ENCODE measurements at regions of chr9 and their contacts with region 1.

Region 1: DNA sequence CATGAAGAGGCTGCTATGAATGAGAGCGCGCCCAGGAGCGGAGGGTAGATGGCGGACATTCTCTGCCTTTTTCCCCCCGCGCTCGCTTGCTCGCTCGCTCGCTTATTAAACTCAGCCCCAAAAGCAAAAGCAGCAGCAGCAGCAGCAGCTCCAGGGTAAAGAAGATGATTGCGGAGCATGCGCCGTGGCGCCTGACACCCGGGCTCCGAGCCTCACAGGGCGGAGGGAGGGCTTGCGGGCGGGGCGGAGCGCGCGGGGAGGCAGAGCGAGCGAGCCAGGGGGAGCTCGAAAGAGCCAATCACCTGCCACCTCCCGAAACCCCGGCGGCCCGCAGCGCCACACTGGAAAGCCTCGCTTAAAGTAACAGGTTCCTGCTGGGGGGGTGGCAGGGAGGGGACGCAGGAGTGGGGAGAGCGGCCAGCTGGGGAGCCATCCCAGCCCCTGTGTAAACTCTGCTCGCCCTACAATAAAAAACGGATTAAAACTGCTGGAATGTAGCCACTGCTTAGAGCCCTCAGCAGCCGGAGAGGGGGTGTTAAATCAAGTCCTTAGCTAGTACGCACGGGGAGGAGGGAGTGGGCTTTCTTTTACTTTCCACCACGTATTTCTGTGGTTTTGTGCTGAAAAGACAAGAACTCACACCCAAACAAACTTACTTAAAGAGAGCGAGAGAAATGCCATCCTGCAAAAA is at the start of gene MLLT3:
- DNase-seq: peak; percentile 84
- ATAC-seq: peak; percentile 91
- H3K4me3 ChIP-seq: peak within 1 kb of the TSS; percentile 81 to 88 (median 85)
- H3K27ac ChIP-seq: peak within 1 kb of the TSS; percentile 60
- H3K4me1 ChIP-seq: peaks cover 26% of the 10 kb centered on the region
- H3K27me3 ChIP-seq: peaks cover 0 to 24% of the 10 kb centered on the region in 2 experiments; a peak in 2 of 5 replicates
- CTCF ChIP-seq: peak; percentile 25
- EP300 ChIP-seq: no peak
- POLR2A ChIP-seq: no peak
- RAD21 ChIP-seq: no peak
- total RNA-seq, gene MLLT3: 12.3 and 18.5 TPM in 2 replicates

Region 2: GRCh38 chr9:20356403-20357035 is 266.0 kb before region 1 on chr9:
- CTCF ChIA-PET with region 1: interaction called, 5 read pairs
- POLR2A ChIA-PET with region 1: interaction called, 13 read pairs
- in situ Hi-C with region 1: loop called (anchors 5 kb)
- intact Hi-C with region 1: loop called (anchors 1 kb)
- DNase-seq: peak; percentile 64
- ATAC-seq: peak; percentile 96
- H3K4me3 ChIP-seq: no peak overlapping the region; a peak in 2 of 6 replicates
- H3K27ac ChIP-seq: peak overlapping the region; percentile 6
- H3K4me1 ChIP-seq: peaks cover 18% of the 10 kb centered on the region
- H3K27me3 ChIP-seq: no peaks in the 10 kb centered on the region
- CTCF ChIP-seq: peak; percentile 85
- EP300 ChIP-seq: no peak
- POLR2A ChIP-seq: no peak
- RAD21 ChIP-seq: peak; percentile 69

Region 3: DNA sequence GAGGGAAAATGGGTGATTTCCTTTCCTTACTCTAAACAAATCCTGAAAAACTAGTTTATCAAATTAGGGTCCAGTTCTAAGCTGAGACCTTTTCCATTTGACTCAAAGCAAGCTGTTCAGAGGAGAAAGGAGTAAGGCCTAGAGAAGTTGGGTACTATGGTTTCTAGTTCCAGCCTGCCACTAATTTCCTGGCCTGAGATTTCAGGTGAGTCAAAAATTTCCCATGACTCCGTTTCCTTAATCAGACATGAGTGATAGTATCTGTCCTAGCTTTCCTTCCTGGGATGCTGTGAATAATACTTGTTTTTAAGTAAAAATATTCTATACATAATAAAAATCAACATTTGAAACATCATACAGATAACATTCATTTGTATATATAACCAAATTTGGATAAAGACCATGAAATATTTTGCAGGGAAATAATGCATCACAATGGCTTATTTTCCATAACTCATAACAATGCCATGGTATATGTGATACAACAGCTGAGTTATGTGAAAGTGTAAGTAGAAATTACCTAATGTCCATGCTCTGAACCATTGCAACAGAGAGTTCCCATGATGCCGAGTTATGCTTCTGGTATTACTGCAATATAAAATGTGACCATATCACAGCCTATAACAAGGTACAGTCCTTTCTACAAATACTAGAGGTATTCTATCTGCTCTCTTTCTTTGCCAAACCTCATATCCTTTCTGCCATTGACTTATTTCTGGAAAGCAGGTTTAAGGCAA is 142.9 kb before region 1 on chr9:
- CTCF ChIA-PET with region 1: no interaction called
- POLR2A ChIA-PET with region 1: no interaction called
- in situ Hi-C with region 1: no loop called
- intact Hi-C with region 1: loop called (anchors 5 kb)
- DNase-seq: no peak
- ATAC-seq: no peak
- H3K4me3 ChIP-seq: no peak overlapping the region
- H3K27ac ChIP-seq: no peak overlapping the region
- H3K4me1 ChIP-seq: peaks cover 45% of the 10 kb centered on the region
- H3K27me3 ChIP-seq: no peaks in the 10 kb centered on the region
- CTCF ChIP-seq: no peak
- EP300 ChIP-seq: no peak
- POLR2A ChIP-seq: no peak
- RAD21 ChIP-seq: no peak

Region 4: GRCh38 chr9:20558566-20559016 is 63.9 kb before region 1 on chr9:
- CTCF ChIA-PET with region 1: no interaction called
- POLR2A ChIA-PET with region 1: no interaction called
- in situ Hi-C with region 1: loop called (anchors 10 kb)
- intact Hi-C with region 1: loop called (anchors 5 kb)
- DNase-seq: no peak
- ATAC-seq: no peak
- H3K4me3 ChIP-seq: no peak overlapping the region
- H3K27ac ChIP-seq: no peak overlapping the region
- H3K4me1 ChIP-seq: peaks cover 6% of the 10 kb centered on the region
- H3K27me3 ChIP-seq: no peaks in the 10 kb centered on the region
- CTCF ChIP-seq: no peak
- EP300 ChIP-seq: no peak
- POLR2A ChIP-seq: no peak
- RAD21 ChIP-seq: no peak

Region 5: GRCh38 chr9:20640331-20641187 is 18.1 kb after region 1 on chr9:
- CTCF ChIA-PET with region 1: no interaction called
- POLR2A ChIA-PET with region 1: no interaction called
- in situ Hi-C with region 1: no loop called
- intact Hi-C with region 1: no loop called
- DNase-seq: no peak
- ATAC-seq: no peak
- H3K4me3 ChIP-seq: no peak overlapping the region
- H3K27ac ChIP-seq: no peak overlapping the region
- H3K4me1 ChIP-seq: no peaks in the 10 kb centered on the region
- H3K27me3 ChIP-seq: 0 out of 5 replicates have a peak, but pooled peaks cover 0 to 6% of the 10 kb centered on the region in 2 experiments
- CTCF ChIP-seq: no peak
- EP300 ChIP-seq: no peak
- POLR2A ChIP-seq: no peak
- RAD21 ChIP-seq: no peak

Region 6: DNA sequence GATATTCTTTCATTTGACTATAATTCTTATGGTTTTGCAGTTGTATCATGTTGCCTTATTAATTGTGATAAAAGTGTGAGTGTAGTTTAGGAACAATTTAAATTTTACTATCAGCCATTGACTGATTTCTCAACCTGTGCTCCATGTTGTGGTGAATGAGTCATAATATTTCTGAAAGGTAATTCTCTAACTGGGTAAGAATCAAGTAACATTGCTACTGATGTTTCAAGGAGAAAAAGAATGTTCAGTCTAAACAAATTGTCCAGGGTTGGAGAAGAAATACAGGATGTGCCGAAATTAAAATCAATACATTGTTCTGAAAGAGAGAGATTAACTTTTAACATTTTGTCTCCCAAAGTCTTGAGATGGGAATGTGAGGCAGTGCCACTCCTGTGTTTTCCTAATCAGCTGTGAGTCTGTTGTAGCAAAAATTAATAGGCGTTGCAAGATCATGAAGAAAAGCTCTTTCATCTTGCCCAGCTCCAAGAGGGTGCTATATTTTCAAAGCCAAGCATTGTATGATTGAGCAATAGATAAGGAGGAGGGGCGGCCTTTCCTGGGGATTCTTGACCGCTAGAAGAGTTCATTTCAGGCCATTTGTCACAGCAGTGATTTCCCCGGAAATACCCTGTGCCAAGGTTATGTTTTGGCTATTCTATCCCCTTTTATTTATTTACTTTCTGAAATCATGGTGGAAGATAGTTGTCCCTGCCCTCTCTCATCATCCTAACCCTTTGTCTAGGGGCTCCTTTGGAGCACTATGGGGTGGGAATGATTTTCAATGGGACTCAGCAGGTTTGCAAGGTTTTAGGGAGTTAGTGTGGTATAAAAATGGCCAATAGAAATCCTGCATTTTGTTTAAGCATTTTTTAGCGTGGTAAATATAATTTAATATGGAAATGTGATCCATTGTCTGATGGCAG is 213.2 kb after region 1 on chr9:
- CTCF ChIA-PET with region 1: no interaction called
- POLR2A ChIA-PET with region 1: no interaction called
- in situ Hi-C with region 1: no loop called
- intact Hi-C with region 1: loop called (anchors 2 kb)
- DNase-seq: peak; percentile 85
- ATAC-seq: peak; percentile 93
- H3K4me3 ChIP-seq: no peak overlapping the region
- H3K27ac ChIP-seq: peak overlapping the region; percentile 21
- H3K4me1 ChIP-seq: peaks cover 18% of the 10 kb centered on the region
- H3K27me3 ChIP-seq: no peaks in the 10 kb centered on the region
- CTCF ChIP-seq: no peak
- EP300 ChIP-seq: peak; percentile 40 to 84; a peak in 2 of 4 replicates
- POLR2A ChIP-seq: no peak
- RAD21 ChIP-seq: no peak

Region 7: GRCh38 chr9:20941174-20941690 is 318.8 kb after region 1 on chr9:
- CTCF ChIA-PET with region 1: interaction called, 23 read pairs
- POLR2A ChIA-PET with region 1: interaction called, 3 read pairs
- in situ Hi-C with region 1: loop called (anchors 5 kb)
- intact Hi-C with region 1: loop called (anchors 1 kb)
- DNase-seq: peak; percentile 63
- ATAC-seq: peak; percentile 100
- H3K4me3 ChIP-seq: no peak overlapping the region
- H3K27ac ChIP-seq: no peak overlapping the region
- H3K4me1 ChIP-seq: no peaks in the 10 kb centered on the region
- H3K27me3 ChIP-seq: no peaks in the 10 kb centered on the region
- CTCF ChIP-seq: peak; percentile 94
- EP300 ChIP-seq: no peak
- POLR2A ChIP-seq: no peak
- RAD21 ChIP-seq: peak; percentile 83

Region 8: GRCh38 chr9:21688108-21689102 is 1065.9 kb after region 1 on chr9:
- CTCF ChIA-PET with region 1: no interaction called
- POLR2A ChIA-PET with region 1: no interaction called
- in situ Hi-C with region 1: no loop called
- intact Hi-C with region 1: no loop called
- DNase-seq: no peak
- ATAC-seq: no peak
- H3K4me3 ChIP-seq: no peak overlapping the region
- H3K27ac ChIP-seq: no peak overlapping the region
- H3K4me1 ChIP-seq: no peaks in the 10 kb centered on the region
- H3K27me3 ChIP-seq: no peaks in the 10 kb centered on the region
- CTCF ChIP-seq: no peak
- EP300 ChIP-seq: no peak
- POLR2A ChIP-seq: no peak
- RAD21 ChIP-seq: no peak